ENCODE measurements at regions of chr1 and their contacts with region 1.

Region 1: DNA sequence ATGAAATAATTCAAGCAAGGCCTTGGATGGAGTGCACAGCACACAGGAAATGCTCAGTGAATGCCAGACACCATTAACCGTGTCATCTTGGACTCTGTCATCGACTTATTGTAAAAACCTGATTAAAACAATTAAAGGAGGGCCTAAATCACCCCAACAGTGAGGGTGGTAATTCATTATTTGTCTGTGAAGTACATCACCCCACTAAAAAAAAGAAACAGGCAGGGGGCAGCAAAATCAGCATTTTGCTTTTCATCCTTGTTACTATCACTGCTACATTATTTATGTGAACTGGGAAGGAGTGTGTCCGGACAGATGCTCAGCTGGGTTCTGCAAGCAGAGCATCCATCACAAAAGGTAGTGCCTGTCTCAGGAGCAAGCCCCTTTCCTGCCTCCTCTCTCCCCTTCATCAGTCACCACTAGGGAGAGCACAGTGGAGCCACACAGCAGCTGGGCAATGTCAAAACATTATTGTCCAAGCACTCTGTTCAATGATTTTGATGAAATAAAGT is 98.5 kb downstream of the RERE start:
- DNase-seq: no peak
- H3K4me3 ChIP-seq: no peak overlapping the region
- H3K27ac ChIP-seq: no peak overlapping the region
- H3K4me1 ChIP-seq: peaks cover 1% of the 10 kb centered on the region
- H3K27me3 ChIP-seq: no peaks in the 10 kb centered on the region
- CTCF ChIP-seq: peak in 1 of 4 experiments; percentile 18
- POLR2A ChIP-seq: no peak

Region 2: GRCh38 chr1:8780405-8780804 is 61.5 kb after region 1 on chr1:
- intact Hi-C with region 1: no loop called
- DNase-seq: no peak
- H3K4me3 ChIP-seq: no peak overlapping the region
- H3K27ac ChIP-seq: no peak overlapping the region
- H3K4me1 ChIP-seq: no peaks in the 10 kb centered on the region
- H3K27me3 ChIP-seq: no peaks in the 10 kb centered on the region
- CTCF ChIP-seq: no peak
- POLR2A ChIP-seq: no peak

Region 3: DNA sequence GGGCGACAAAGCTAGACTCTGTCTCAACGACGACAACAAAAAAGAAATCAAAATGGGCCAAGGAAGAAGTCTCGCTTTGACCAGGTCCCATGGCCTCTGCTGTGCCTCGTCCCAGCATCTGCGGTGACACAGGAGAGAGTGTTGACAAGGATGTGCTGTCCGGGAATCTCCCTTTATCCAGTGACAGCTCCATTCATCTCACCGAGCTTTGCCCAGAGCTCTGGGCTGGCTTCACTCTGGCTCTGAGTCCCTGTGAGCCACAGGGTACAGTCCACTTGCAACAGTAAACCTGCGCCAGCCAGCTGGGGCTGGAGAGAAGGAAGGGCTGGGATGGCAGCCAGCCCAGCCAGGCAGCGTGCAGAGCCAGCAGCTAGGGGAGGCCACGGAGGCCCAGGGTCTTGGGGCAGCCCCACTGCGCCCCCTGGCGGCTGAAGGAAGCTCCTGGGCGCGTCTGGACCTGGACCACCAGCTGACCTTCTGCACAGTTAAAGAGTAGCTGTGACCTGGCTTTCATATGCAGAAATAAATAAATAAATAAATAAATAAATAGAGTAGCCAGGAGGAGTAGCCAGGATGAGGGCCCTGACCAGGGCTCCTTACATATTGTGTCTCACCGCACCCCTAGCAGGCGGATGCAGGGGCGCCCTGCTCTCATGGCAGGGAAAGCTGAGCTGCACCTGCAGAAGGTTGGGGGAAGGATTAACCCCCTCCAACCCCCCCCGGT is 129.9 kb after region 1 on chr1:
- intact Hi-C with region 1: loop called (anchors 5 kb)
- DNase-seq: peak; percentile 94
- H3K4me3 ChIP-seq: no peak overlapping the region
- H3K27ac ChIP-seq: peak overlapping the region; percentile 5 to 67
- H3K4me1 ChIP-seq: peaks cover 9% of the 10 kb centered on the region
- H3K27me3 ChIP-seq: no peaks in the 10 kb centered on the region
- CTCF ChIP-seq: peak; percentile 88 to 97 (median 96)
- POLR2A ChIP-seq: peak; percentile 19

Region 4: DNA sequence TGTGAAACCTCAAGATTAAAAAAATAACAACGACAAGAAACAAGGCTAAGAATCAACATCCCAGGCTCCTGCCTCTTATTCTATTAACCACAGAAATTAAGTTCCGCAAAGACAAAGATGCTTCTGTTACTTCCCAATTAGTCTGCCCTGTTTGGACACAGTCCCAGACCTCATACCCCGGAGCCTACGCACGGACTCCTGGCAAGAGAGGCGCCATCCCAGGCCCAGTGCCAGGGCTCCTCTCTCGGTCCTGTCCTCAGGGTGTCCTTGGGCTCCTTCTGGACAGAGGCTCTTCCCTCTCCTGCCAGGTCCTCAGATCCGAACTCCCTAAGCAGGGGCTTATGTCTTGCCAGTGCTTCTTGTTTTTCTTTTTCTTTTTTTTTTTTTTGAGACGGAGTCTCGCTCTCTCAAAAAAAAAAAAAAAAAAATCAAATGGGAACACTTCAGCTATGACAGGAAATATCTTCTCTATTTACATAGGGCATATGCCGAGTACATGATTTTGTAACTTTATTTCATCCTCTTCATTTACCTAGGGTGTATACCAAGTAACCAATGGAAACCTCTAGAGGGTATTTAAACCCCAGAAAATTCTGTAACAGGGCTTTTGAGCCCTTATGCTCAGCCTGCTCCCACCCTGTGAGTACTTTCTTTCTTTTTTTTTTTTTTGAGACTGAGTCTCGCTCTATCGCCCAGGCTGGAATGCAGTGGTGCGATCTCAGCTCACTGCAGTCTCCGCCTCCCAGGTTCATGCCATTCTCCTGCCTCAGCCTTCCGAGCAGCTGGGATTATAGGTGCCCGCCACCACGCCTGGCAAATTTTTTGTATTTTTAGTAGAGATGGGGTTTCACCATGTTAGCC is 171.2 kb after region 1 on chr1:
- intact Hi-C with region 1: no loop called
- DNase-seq: peak; percentile 92
- H3K4me3 ChIP-seq: peak overlapping the region in 1 of 2 donors; percentile 8
- H3K27ac ChIP-seq: peak overlapping the region; percentile 71 to 73
- H3K4me1 ChIP-seq: no peaks in the 10 kb centered on the region
- H3K27me3 ChIP-seq: no peaks in the 10 kb centered on the region
- CTCF ChIP-seq: no peak
- POLR2A ChIP-seq: no peak